GM12878 (cell line): ENCODE measurements at regions of chr1 and their contacts with region 1.

Region 1: GRCh38 chr1:109201123-109201703 is 12.5 kb upstream of the SARS1 start:
- DNase-seq: no peak
- ATAC-seq: peak; percentile 79
- H3K4me3 ChIP-seq: no peak overlapping the region
- H3K27ac ChIP-seq: no peak overlapping the region
- H3K4me1 ChIP-seq: no peaks in the 10 kb centered on the region
- H3K27me3 ChIP-seq: no peaks in the 10 kb centered on the region; a peak in 1 of 4 replicates
- CTCF ChIP-seq: peak; percentile 60 to 69 (median 67)
- EP300 ChIP-seq: no peak
- POLR2A ChIP-seq: no peak
- RAD21 ChIP-seq: peak; percentile 59

Region 2: GRCh38 chr1:109213785-109214468 is 12.7 kb after region 1 on chr1 and contains the start of gene SARS1:
- CTCF ChIA-PET with region 1: interaction called, 19 read pairs
- POLR2A ChIA-PET with region 1: interaction called, 10 read pairs
- RAD21 ChIA-PET with region 1: interaction called, 10 read pairs
- SMC1A ChIA-PET with region 1: interaction called, 5 read pairs
- in situ Hi-C with region 1: no loop called
- intact Hi-C with region 1: no loop called
- DNase-seq: peak; percentile 62
- ATAC-seq: peak; percentile 94
- H3K4me3 ChIP-seq: peak within 1 kb of the TSS; percentile 89
- H3K27ac ChIP-seq: peak within 1 kb of the TSS; percentile 88
- H3K4me1 ChIP-seq: no peaks in the 10 kb centered on the region
- H3K27me3 ChIP-seq: no peaks in the 10 kb centered on the region
- CTCF ChIP-seq: no peak
- EP300 ChIP-seq: 0 out of 4 replicates have a peak, but pooled peaks of 1 of the 2 experiments have one; percentile 13
- POLR2A ChIP-seq: peak; percentile 82
- RAD21 ChIP-seq: no peak
- polyA plus RNA-seq, gene SARS1: 148 to 202 TPM

Region 3: GRCh38 chr1:109239580-109240095 is 38.4 kb after region 1 on chr1:
- CTCF ChIA-PET with region 1: interaction called, 11 read pairs
- POLR2A ChIA-PET with region 1: no interaction called
- RAD21 ChIA-PET with region 1: interaction called, 3 read pairs
- SMC1A ChIA-PET with region 1: no interaction called
- in situ Hi-C with region 1: no loop called
- intact Hi-C with region 1: no loop called
- DNase-seq: no peak
- ATAC-seq: peak; percentile 92
- H3K4me3 ChIP-seq: no peak overlapping the region
- H3K27ac ChIP-seq: no peak overlapping the region
- H3K4me1 ChIP-seq: no peaks in the 10 kb centered on the region
- H3K27me3 ChIP-seq: no peaks in the 10 kb centered on the region
- CTCF ChIP-seq: peak; percentile 17 to 66 (median 47); a peak in 5 of 6 replicates
- EP300 ChIP-seq: no peak
- POLR2A ChIP-seq: peak; percentile 58
- RAD21 ChIP-seq: no peak